K562 (cell line): ENCODE measurements at regions of chr21 and their contacts with region 1.

Region 1: GRCh38 chr21:36854391-36854790 is 112.1 kb downstream of the HLCS start:
- DNase-seq: peak; percentile 72 to 79 (median 75)
- ATAC-seq: peak; percentile 94
- H3K4me3 ChIP-seq: no peak overlapping the region
- H3K27ac ChIP-seq: no peak overlapping the region
- H3K4me1 ChIP-seq: peaks cover 2% of the 10 kb centered on the region in 2 experiments; a peak in 3 of 5 replicates
- H3K27me3 ChIP-seq: no peaks in the 10 kb centered on the region; a peak in 1 of 5 replicates
- CTCF ChIP-seq: peak; percentile 83 to 90 (median 90)
- EP300 ChIP-seq: no peak
- POLR2A ChIP-seq: no peak
- RAD21 ChIP-seq: peak; percentile 28 to 69; a peak in 3 of 4 replicates

Region 2: GRCh38 chr21:36661511-36662309 is 192.7 kb before region 1 on chr21:
- CTCF ChIA-PET with region 1: interaction called, 3 read pairs
- POLR2A ChIA-PET with region 1: no interaction called
- in situ Hi-C with region 1: no loop called
- intact Hi-C with region 1: loop called (anchors 10 kb)
- DNase-seq: peak; percentile 35 to 72 (median 50)
- ATAC-seq: peak; percentile 81
- H3K4me3 ChIP-seq: no peak overlapping the region
- H3K27ac ChIP-seq: no peak overlapping the region
- H3K4me1 ChIP-seq: no peaks in the 10 kb centered on the region
- H3K27me3 ChIP-seq: peaks cover 32 to 56% of the 10 kb centered on the region in 2 experiments
- CTCF ChIP-seq: peak; percentile 67 to 76 (median 73)
- EP300 ChIP-seq: no peak
- POLR2A ChIP-seq: no peak
- RAD21 ChIP-seq: peak; percentile 34 to 80; a peak in 3 of 4 replicates

Region 3: GRCh38 chr21:36747815-36748383 is 106.5 kb before region 1 on chr21:
- CTCF ChIA-PET with region 1: no interaction called
- POLR2A ChIA-PET with region 1: interaction called, 3 read pairs
- in situ Hi-C with region 1: no loop called
- intact Hi-C with region 1: loop called (anchors 5 kb)
- DNase-seq: peak; percentile 70 to 87 (median 81)
- ATAC-seq: peak; percentile 90
- H3K4me3 ChIP-seq: peak overlapping the region; percentile 21
- H3K27ac ChIP-seq: no peak overlapping the region
- H3K4me1 ChIP-seq: peaks cover 0 to 21% of the 10 kb centered on the region in 2 experiments; a peak in 3 of 5 replicates
- H3K27me3 ChIP-seq: peaks cover 34 to 42% of the 10 kb centered on the region in 2 experiments; a peak in 4 of 5 replicates
- CTCF ChIP-seq: peak in 2 of 3 experiments; percentile 42 to 71; a peak in 3 of 6 replicates
- EP300 ChIP-seq: no peak
- POLR2A ChIP-seq: no peak
- RAD21 ChIP-seq: peak in 1 of 2 experiments; percentile 54; a peak in 2 of 4 replicates

Region 4: DNA sequence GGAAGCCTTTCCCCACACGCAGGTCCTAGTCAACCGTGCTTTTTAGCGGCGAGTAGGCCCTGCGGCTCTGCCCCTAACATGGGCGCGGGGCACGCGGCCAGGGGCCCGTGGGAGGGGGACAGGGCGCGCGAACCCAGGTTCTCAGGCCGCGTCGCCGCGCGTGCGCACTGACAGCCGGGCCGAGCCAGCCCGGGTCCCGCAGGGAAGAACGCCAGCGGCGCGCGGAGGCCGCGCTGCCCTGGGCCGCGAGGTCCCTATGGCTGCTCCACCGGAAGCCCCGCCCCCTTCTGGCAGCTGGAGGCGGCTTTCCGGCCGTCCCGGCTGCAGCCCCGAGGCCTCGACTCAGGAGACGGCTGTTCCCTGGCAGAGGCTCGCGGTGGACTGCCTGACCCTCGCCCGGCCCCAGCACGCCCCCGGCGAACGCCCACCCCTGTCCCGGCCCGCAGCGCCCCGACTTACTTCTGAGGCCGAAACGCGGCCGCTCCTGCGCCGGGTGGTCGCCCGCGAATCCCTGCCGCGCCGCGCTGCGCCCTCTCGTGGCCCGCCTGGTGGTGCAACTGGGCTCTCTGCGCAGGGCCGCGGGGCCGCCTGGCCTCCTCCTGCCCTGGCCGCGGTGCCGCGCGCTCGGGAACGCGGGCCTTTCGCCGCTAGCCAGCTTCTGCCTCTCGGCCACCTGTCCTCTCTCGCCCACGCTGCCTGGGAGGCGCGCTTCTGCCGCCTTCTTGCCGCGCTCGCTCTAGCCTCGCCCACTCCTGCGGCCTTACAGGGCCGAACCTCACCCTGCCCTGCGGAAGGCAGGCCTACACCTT is 135.5 kb after region 1 on chr21:
- CTCF ChIA-PET with region 1: no interaction called
- POLR2A ChIA-PET with region 1: no interaction called
- in situ Hi-C with region 1: no loop called
- intact Hi-C with region 1: no loop called
- DNase-seq: peak; percentile 98 to 99 (median 99)
- ATAC-seq: peak; percentile 97
- H3K4me3 ChIP-seq: peak overlapping the region; percentile 62
- H3K27ac ChIP-seq: peak overlapping the region; percentile 93
- H3K4me1 ChIP-seq: peaks cover 7 to 23% of the 10 kb centered on the region in 2 experiments
- H3K27me3 ChIP-seq: no peaks in the 10 kb centered on the region
- CTCF ChIP-seq: peak; percentile 65 to 91 (median 82)
- EP300 ChIP-seq: 0 out of 2 replicates have a peak, but pooled peaks have one; percentile 4
- POLR2A ChIP-seq: peak; percentile 92
- RAD21 ChIP-seq: peak; percentile 55 to 66